Breast epithelium (tissue), 4 donors: ENCODE measurements at regions of chr7 and their contacts with region 1.

Region 1: GRCh38 chr7:98816241-98816640 is 53.6 kb downstream of the TMEM130 start:
- DNase-seq: no peak
- H3K4me3 ChIP-seq: no peak overlapping the region
- H3K27ac ChIP-seq: no peak overlapping the region
- H3K4me1 ChIP-seq: no peaks in the 10 kb centered on the region
- H3K27me3 ChIP-seq: no peaks in the 10 kb centered on the region
- CTCF ChIP-seq: no peak
- POLR2A ChIP-seq: no peak

Region 2: GRCh38 chr7:98788966-98789365 is 27.3 kb before region 1 on chr7:
- intact Hi-C with region 1: loop called (anchors 2 kb)
- DNase-seq: no peak
- H3K4me3 ChIP-seq: no peak overlapping the region
- H3K27ac ChIP-seq: no peak overlapping the region
- H3K4me1 ChIP-seq: no peaks in the 10 kb centered on the region
- H3K27me3 ChIP-seq: peaks cover 0 to 17% of the 10 kb centered on the region in 2 donors
- CTCF ChIP-seq: no peak
- POLR2A ChIP-seq: no peak

Region 3: GRCh38 chr7:100407285-100408180 is 1591.3 kb after region 1 on chr7:
- intact Hi-C with region 1: no loop called
- DNase-seq: no peak
- H3K4me3 ChIP-seq: no peak overlapping the region
- H3K27ac ChIP-seq: no peak overlapping the region
- H3K4me1 ChIP-seq: no peaks in the 10 kb centered on the region
- H3K27me3 ChIP-seq: no peaks in the 10 kb centered on the region
- CTCF ChIP-seq: peak in 2 of 3 donors; percentile 48 to 58
- POLR2A ChIP-seq: no peak